ENCODE measurements at regions of chr16 and their contacts with region 1.

Region 1: DNA sequence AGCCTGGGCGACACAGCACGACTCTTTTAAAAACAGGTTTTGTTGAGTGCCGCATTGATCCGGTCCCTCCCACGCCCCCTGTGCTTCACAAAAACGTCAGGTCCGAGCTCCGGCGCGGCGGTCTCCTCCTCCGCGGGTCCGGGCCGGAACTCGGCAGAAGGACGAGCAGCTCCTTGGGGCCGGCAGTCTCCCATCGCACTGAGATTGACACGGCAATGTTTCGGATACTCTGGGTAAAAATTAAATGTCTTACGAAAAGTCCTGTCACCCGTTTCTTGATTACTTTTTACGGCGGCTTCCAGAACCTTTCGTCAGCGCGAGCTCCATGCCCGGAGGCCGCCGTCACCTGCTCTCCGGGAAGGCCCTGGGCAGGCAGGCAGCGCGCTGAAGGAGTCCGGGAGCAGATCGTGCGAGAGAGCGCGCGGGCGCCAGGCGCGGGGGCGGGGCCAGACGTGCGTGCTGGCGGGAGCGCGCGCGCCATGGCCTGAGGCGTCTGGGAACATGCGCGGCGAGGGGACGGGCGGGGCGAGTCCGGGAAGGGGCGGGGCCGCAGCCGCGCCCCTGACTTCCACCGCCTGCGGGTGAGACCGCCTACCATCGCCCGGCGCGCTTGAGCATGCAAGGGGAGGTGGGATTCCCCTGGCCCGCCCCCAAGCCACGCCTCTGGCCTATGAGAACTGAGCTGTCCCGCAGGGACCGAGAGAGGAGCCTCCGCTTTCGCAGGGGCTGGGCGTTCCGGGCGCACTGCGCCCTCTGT is 11.7 kb upstream of the SRL start:
- DNase-seq: peak; percentile 100
- ATAC-seq: peak; percentile 97
- H3K4me3 Mint-ChIP-seq: peak overlapping the region; percentile 87
- H3K27ac Mint-ChIP-seq: peak overlapping the region; percentile 96
- H3K4me1 Mint-ChIP-seq: peaks cover 8% of the 10 kb centered on the region; the same call in 1 of the 2 replicates
- H3K27me3 Mint-ChIP-seq: no peaks in the 10 kb centered on the region
- CTCF ChIP-seq: no peak

Region 2: DNA sequence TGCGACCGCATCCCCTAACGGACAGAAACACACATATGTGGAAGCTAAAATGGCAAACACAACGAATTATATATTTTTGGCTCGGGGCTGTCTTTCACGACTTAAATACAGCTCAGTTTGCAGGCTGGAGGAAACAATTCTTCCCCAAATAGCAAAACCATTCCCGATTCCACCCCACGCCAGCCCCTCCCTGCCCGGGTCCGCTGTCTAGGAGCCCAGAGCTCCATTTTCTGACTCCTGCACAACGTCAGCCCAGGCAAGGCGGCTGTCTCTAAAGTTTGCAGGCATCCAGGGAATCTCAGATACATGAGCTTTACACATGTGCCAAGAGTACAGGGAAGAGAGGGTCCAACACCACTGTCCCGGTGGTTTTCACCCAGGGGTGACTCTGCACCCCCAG is 247.8 kb before region 1 on chr16:
- CTCF ChIA-PET with region 1: interaction called, 10 read pairs
- POLR2A ChIA-PET with region 1: no interaction called
- DNase-seq: no peak
- ATAC-seq: no peak
- H3K4me3 Mint-ChIP-seq: no peak overlapping the region
- H3K27ac Mint-ChIP-seq: peak overlapping the region; percentile 70; the same call in 1 of the 2 replicates
- H3K4me1 Mint-ChIP-seq: peaks cover 43% of the 10 kb centered on the region
- H3K27me3 Mint-ChIP-seq: no peaks in the 10 kb centered on the region
- CTCF ChIP-seq: no peak

Region 3: DNA sequence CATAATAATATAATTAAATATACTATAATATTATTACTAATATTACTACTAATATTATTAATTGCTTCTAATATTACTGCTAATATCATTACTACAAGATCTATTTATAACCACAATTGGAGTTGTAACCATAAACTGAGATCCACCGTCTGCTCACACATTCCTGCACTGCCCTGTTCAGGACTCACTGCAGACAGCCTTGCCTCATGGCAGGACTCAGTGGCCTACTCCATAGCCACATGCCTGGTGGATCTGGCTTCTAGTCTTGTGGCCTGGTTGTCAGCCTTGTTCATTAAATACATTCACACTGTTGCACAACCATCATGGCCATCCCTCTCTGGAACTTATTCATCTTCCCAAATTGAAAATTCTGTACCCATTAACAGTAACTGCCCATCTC is 59.7 kb before region 1 on chr16:
- CTCF ChIA-PET with region 1: interaction called, 25 read pairs
- POLR2A ChIA-PET with region 1: interaction called, 4 read pairs
- DNase-seq: no peak
- ATAC-seq: no peak
- H3K4me3 Mint-ChIP-seq: no peak overlapping the region
- H3K27ac Mint-ChIP-seq: no peak overlapping the region
- H3K4me1 Mint-ChIP-seq: peaks cover 5% of the 10 kb centered on the region; the same call in 1 of the 2 replicates
- H3K27me3 Mint-ChIP-seq: no peaks in the 10 kb centered on the region; the same call in 1 of the 2 replicates
- CTCF ChIP-seq: no peak

Region 4: GRCh38 chr16:4239020-4239419 is 14.6 kb before region 1 on chr16:
- CTCF ChIA-PET with region 1: interaction called, 30 read pairs
- POLR2A ChIA-PET with region 1: interaction called, 5 read pairs
- DNase-seq: no peak
- ATAC-seq: no peak
- H3K4me3 Mint-ChIP-seq: no peak overlapping the region
- H3K27ac Mint-ChIP-seq: no peak overlapping the region
- H3K4me1 Mint-ChIP-seq: peaks cover 20% of the 10 kb centered on the region
- H3K27me3 Mint-ChIP-seq: no peaks in the 10 kb centered on the region
- CTCF ChIP-seq: no peak

Region 5: GRCh38 chr16:4307215-4308037 is 53.9 kb after region 1 on chr16:
- CTCF ChIA-PET with region 1: interaction called, 30 read pairs
- POLR2A ChIA-PET with region 1: no interaction called
- DNase-seq: peak; percentile 94
- ATAC-seq: peak; percentile 78
- H3K4me3 Mint-ChIP-seq: peak overlapping the region; percentile 96
- H3K27ac Mint-ChIP-seq: peak overlapping the region; percentile 97
- H3K4me1 Mint-ChIP-seq: peaks cover 39% of the 10 kb centered on the region
- H3K27me3 Mint-ChIP-seq: no peaks in the 10 kb centered on the region; the same call in 1 of the 2 replicates
- CTCF ChIP-seq: no peak

Region 6: DNA sequence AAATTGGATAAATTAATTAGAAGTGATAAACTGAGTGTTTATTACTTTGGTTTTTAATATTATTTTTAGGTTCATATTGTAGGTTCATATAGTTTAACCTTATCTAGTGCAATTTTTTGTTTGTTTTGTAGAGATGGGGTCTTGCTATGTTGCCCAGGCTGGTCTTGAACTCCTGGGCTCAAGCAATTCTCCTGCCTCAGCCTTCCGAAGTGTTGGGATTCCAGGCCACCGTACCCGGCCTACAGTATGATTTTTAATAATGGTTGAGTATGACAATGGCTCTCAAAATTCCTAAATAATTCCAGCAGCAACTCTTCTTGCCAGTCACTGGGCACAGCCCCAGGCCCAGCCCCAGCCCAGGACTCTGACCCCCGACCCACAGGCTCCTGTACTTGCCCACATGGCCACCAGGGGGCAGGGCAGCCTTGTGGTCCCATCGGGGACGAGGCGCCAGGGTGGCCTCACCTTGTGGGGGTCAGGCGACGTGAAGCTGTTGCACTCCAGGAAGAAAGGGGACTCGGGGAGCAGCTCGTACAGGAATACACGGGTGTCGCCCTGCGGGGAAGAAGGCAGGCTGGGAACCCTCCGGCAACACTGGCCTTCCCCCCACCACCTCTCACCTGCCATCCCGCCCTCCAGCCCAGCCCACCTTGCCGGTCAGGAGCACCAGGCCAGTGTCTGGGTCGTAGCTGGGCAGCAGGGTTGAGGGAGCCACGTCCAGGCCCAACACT is 105.4 kb after region 1 on chr16:
- CTCF ChIA-PET with region 1: interaction called, 10 read pairs
- POLR2A ChIA-PET with region 1: no interaction called
- DNase-seq: peak; percentile 94
- ATAC-seq: peak; percentile 90
- H3K4me3 Mint-ChIP-seq: no peak overlapping the region
- H3K27ac Mint-ChIP-seq: no peak overlapping the region
- H3K4me1 Mint-ChIP-seq: no peaks in the 10 kb centered on the region
- H3K27me3 Mint-ChIP-seq: no peaks in the 10 kb centered on the region
- CTCF ChIP-seq: peak; percentile 100